ENCODE measurements at regions of chr12 and their contacts with region 1.

Region 1: DNA sequence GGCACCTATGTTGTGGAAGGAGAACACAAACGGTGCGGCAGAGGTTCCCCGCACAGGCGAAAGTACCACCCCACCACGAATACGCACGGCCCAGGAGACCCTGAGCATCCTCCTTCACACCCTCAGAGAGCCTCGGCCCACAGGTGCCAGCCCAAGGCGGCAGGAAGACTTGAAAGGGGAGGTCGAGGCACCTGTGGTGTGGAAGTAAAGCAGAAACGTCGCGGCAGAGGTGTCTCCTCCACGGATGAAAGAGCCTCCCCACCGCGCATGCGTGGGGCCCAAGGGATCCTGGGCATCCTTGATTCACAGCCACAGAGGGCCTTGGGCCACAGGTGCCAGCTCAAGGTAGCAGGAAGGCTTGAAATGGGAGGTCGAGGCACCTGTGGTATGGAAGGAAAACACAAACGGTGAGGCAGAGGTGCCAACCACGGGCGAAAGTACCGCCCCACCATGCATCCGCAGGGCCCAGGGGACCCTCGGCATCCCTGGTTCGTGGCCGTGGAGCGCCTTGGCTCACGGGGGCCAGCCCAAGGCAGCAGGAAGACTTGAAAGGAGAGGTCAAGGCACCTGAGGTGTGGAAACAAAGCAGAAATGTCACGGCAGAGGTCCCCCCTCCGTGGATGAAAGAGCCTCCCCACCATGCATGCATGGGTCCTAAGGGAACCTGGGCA is 380.1 kb downstream of the ALG10 start:
- DNase-seq: no peak
- H3K4me3 ChIP-seq: no peak overlapping the region
- H3K27ac ChIP-seq: no peak overlapping the region
- H3K4me1 ChIP-seq: no peaks in the 10 kb centered on the region
- H3K27me3 ChIP-seq: no peaks in the 10 kb centered on the region
- CTCF ChIP-seq: no peak

Region 2: DNA sequence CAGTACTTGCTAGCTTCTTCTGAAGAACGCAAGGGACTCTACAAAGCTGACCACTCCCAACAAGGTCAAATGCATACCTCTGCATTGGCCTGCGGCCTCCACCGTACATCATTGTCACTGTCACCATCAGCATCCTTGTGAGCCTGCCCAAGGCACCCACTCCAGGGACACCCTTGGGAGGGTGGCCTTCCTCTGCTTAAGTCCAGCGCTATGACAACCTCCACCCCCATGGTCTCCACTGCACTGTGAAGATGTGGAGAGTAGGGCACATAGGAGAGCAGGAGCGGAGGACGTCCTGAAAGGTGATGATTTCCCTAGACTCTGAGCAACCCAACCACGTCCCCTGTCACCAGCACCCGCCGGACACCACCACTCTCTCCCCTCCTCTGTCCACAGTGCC is 127.2 kb before region 1 on chr12:
- CTCF ChIA-PET with region 1: no interaction called
- dilution Hi-C with region 1: loop called (anchors 10 kb)
- in situ Hi-C with region 1: no loop called
- intact Hi-C with region 1: no loop called
- DNase-seq: no peak
- H3K4me3 ChIP-seq: no peak overlapping the region
- H3K27ac ChIP-seq: no peak overlapping the region
- H3K4me1 ChIP-seq: no peaks in the 10 kb centered on the region
- H3K27me3 ChIP-seq: no peaks in the 10 kb centered on the region
- CTCF ChIP-seq: no peak

Region 3: DNA sequence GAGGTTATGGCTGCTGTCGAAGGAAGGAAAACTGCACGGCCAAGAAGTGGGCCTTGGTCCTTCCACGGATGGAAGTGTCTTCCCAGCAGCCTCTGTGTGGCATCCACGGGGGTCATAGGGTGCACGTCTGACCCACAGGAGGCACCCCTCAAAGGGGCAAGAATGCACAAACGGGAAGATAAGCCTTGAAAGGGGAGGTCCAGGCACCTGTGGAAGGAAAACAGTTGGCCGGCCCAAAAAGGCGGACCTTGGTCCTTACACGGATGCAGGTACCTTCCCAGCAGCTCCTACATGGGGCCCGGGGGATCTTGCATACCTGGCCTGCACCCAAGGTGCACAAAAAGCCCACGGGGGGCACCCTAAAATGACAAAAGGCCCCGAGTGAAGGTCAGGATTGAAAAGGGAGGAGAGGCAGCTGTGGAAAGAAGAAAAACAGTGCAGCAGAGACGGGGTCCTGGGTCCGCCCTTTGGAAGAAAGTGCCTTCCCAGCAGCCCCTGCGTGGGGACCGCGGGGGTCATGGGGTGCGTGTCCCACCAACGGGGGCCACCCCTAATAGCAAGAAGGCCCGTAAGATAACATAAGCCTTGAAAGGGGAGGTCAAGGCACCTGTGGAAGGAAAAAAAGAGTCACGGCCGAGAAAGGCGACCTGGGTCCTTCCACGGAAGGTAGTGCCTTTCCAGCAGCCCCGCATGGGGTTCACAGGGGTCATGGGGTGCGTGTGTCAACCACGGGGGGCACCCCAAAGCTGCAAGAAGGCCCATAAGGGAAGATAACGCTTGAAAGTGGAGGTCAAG is 104.0 kb before region 1 on chr12:
- CTCF ChIA-PET with region 1: no interaction called
- dilution Hi-C with region 1: no loop called
- in situ Hi-C with region 1: no loop called
- intact Hi-C with region 1: no loop called
- DNase-seq: no peak
- H3K4me3 ChIP-seq: no peak overlapping the region
- H3K27ac ChIP-seq: no peak overlapping the region
- H3K4me1 ChIP-seq: no peaks in the 10 kb centered on the region
- H3K27me3 ChIP-seq: no peaks in the 10 kb centered on the region
- CTCF ChIP-seq: no peak

Region 4: GRCh38 chr12:34333337-34333736 is 69.0 kb before region 1 on chr12:
- CTCF ChIA-PET with region 1: no interaction called
- dilution Hi-C with region 1: no loop called
- in situ Hi-C with region 1: no loop called
- intact Hi-C with region 1: no loop called
- DNase-seq: no peak
- H3K4me3 ChIP-seq: no peak overlapping the region
- H3K27ac ChIP-seq: no peak overlapping the region
- H3K4me1 ChIP-seq: no peaks in the 10 kb centered on the region
- H3K27me3 ChIP-seq: no peaks in the 10 kb centered on the region
- CTCF ChIP-seq: no peak

Region 5: DNA sequence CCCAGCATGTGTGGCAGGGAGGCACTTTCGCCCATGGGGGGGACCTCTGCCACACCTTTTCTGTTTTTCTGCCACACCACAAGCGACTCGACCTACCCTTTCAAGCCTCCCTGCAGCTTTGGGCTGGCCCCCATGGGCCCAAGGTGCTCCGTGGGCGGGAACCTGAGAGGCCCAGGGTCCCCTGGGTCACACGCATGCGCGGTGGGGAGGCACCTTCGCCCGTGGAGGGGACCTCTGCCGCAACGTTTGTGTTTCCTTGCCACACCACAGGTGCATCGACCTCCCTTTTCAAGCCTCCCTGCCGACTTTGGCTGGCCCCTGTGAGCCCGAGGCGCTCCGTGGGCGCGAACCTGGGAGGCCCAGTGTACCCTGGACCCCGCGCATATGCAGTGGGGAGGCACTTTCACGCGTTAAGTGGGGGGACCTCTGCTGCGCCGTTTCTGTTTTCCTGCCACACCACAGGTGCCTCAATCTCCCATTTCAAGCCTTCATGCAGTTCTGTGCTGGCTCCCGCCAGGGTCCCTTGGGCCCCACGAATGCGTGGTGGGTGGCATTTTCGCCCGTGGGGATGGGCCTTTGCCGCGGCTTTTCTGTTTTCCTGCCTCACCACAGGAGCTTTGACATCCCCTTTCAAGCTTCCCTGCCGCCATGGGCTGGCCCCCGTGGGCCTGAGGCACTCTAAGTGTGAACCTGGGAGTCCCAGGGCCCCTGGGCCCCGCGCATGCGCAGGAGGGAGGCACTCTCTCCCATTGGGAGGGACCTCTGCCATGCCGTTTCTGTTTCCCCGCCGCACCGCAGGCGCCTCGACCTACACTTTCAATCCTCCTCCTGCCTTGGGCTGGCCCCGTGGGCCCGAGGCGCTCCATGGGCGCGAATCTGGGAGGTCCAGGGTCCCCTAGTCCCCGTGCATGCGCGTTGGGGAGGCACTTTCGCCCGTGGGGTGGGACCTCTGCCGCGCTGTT is 47.8 kb before region 1 on chr12:
- CTCF ChIA-PET with region 1: no interaction called
- dilution Hi-C with region 1: loop called (anchors 5 kb)
- in situ Hi-C with region 1: no loop called
- intact Hi-C with region 1: no loop called
- DNase-seq: no peak
- H3K4me3 ChIP-seq: no peak overlapping the region
- H3K27ac ChIP-seq: no peak overlapping the region
- H3K4me1 ChIP-seq: no peaks in the 10 kb centered on the region
- H3K27me3 ChIP-seq: no peaks in the 10 kb centered on the region
- CTCF ChIP-seq: no peak

Region 6: GRCh38 chr12:34526946-34527345 is 124.6 kb after region 1 on chr12:
- CTCF ChIA-PET with region 1: no interaction called
- dilution Hi-C with region 1: loop called (anchors 25 kb)
- in situ Hi-C with region 1: no loop called
- intact Hi-C with region 1: no loop called
- DNase-seq: peak; percentile 43
- H3K4me3 ChIP-seq: no peak overlapping the region
- H3K27ac ChIP-seq: no peak overlapping the region
- H3K4me1 ChIP-seq: no peaks in the 10 kb centered on the region
- H3K27me3 ChIP-seq: no peaks in the 10 kb centered on the region
- CTCF ChIP-seq: no peak

Measured in mammary epithelial cell (primary cell).